ENCODE measurements at regions of chr11 and their contacts with region 1.

Region 1: GRCh38 chr11:114977651-114978050 is 299.3 kb downstream of the NXPE2 start:
- DNase-seq: no peak
- H3K4me3 ChIP-seq: no peak overlapping the region
- H3K27ac ChIP-seq: no peak overlapping the region
- H3K4me1 ChIP-seq: no peaks in the 10 kb centered on the region
- H3K27me3 ChIP-seq: peaks cover 0 to 8% of the 10 kb centered on the region in 2 donors
- CTCF ChIP-seq: no peak
- POLR2A ChIP-seq: no peak

Region 2: DNA sequence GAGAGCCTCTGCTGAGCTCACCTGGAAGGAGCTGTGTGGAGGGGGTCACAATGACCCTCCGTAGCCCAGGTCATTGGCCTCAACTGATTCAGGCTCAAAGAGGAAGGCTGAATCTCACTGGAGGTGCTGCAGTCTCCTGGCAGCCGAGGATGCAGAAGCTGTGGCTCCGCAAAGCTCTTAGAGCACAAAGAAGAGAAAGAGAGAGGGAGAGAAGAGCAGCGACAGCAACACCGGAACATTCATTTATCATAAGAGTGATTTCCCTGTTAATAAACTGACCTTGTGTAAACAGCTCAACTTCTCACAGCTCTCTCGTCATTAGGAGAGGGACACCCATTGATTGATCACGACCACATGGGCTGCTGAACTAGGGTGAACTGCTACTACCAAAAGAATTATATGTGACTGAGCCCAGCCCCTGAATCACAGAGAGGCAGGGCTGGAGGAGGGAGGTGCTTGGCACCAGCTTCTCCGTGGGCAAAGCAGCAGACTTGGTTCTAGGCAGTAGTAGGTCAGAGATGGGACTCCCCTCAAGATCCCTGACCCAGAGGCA is 17.6 kb before region 1 on chr11:
- intact Hi-C with region 1: loop called (anchors 1 kb)
- DNase-seq: no peak
- H3K4me3 ChIP-seq: no peak overlapping the region
- H3K27ac ChIP-seq: no peak overlapping the region
- H3K4me1 ChIP-seq: no peaks in the 10 kb centered on the region
- H3K27me3 ChIP-seq: no peaks in the 10 kb centered on the region
- CTCF ChIP-seq: no peak
- POLR2A ChIP-seq: no peak